ENCODE measurements at regions of chr1 and their contacts with region 1.

Region 1: GRCh38 chr1:31422505-31423319 is 9.7 kb downstream of the SERINC2 start:
- DNase-seq: peak; percentile 70
- ATAC-seq: peak; percentile 53
- H3K4me3 Mint-ChIP-seq: peak overlapping the region; percentile 58
- H3K27ac Mint-ChIP-seq: peak overlapping the region; percentile 73
- H3K4me1 Mint-ChIP-seq: peaks cover 25% of the 10 kb centered on the region
- H3K27me3 Mint-ChIP-seq: no peaks in the 10 kb centered on the region
- CTCF ChIP-seq: peak; percentile 78

Region 2: GRCh38 chr1:31155216-31155841 is 267.4 kb before region 1 on chr1:
- CTCF ChIA-PET with region 1: no interaction called
- POLR2A ChIA-PET with region 1: no interaction called
- intact Hi-C with region 1: loop called (anchors 2 kb)
- DNase-seq: peak; percentile 70
- ATAC-seq: peak; percentile 77
- H3K4me3 Mint-ChIP-seq: peak overlapping the region; percentile 85
- H3K27ac Mint-ChIP-seq: peak overlapping the region; percentile 70
- H3K4me1 Mint-ChIP-seq: peaks cover 11% of the 10 kb centered on the region
- H3K27me3 Mint-ChIP-seq: no peaks in the 10 kb centered on the region
- CTCF ChIP-seq: no peak

Region 3: GRCh38 chr1:31182352-31182751 is 240.4 kb before region 1 on chr1:
- CTCF ChIA-PET with region 1: interaction called, 48 read pairs
- POLR2A ChIA-PET with region 1: no interaction called
- intact Hi-C with region 1: loop called (anchors 1 kb)
- DNase-seq: peak; percentile 55
- ATAC-seq: peak; percentile 68
- H3K4me3 Mint-ChIP-seq: no peak overlapping the region
- H3K27ac Mint-ChIP-seq: no peak overlapping the region
- H3K4me1 Mint-ChIP-seq: peaks cover 5% of the 10 kb centered on the region
- H3K27me3 Mint-ChIP-seq: peaks cover 45% of the 10 kb centered on the region
- CTCF ChIP-seq: no peak

Region 4: DNA sequence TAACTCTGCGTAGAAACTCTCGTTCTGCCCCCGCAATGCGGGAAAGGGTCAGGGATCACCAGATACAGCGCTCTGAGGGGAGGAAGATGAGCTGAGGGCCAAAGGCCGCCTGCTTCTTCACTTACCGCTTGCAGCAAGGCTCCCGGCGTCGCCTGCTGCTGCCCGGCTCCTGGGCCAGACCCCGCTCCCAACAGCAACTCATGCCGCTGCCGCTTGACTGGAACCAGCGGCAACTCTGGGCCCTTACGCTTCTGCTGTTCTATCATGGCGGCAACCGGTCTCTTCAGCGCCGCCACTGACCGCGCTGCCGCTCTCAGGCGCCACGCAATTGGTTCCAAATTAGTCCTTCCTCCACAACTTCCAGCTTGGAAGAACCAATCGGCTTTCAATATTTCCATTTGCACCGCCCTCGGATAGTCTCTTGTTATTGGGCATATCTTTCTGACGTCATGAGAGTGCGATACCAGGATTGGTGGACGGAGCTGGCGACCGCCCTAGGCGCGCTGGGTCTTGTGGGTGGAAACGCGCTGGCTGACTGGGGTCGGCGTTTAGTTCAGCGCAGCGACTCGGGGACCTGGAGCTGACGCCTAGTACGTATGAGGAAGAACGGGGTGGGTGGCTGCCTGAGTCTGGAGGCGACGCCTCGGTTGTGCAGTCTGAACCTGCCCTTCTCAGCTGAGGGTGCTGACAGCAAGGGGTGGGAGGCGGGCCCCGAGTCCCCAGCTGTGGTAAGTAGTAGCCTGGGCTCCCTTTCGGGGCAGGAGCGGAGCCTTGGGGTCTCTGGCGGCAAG is 126.0 kb before region 1 on chr1 and contains the starts of genes SNRNP40 and ZCCHC17:
- CTCF ChIA-PET with region 1: no interaction called
- POLR2A ChIA-PET with region 1: no interaction called
- intact Hi-C with region 1: loop called (anchors 2 kb)
- DNase-seq: peak; percentile 79
- ATAC-seq: peak; percentile 96
- H3K4me3 Mint-ChIP-seq: no peak within 1 kb of the TSS
- H3K27ac Mint-ChIP-seq: no peak within 1 kb of the TSS
- H3K4me1 Mint-ChIP-seq: peaks cover 13% of the 10 kb centered on the region
- H3K27me3 Mint-ChIP-seq: no peaks in the 10 kb centered on the region
- CTCF ChIP-seq: no peak
- total RNA-seq, gene SNRNP40: 83.2 and 85.1 TPM in 2 replicates
- total RNA-seq, gene ZCCHC17: 19.5 and 19.9 TPM in 2 replicates

Region 5: GRCh38 chr1:31394628-31395193 is 28.0 kb before region 1 on chr1:
- CTCF ChIA-PET with region 1: interaction called, 60 read pairs
- POLR2A ChIA-PET with region 1: interaction called, 3 read pairs
- intact Hi-C with region 1: loop called (anchors 1 kb)
- DNase-seq: peak; percentile 72
- ATAC-seq: peak; percentile 98
- H3K4me3 Mint-ChIP-seq: peak overlapping the region; percentile 85
- H3K27ac Mint-ChIP-seq: no peak overlapping the region
- H3K4me1 Mint-ChIP-seq: peaks cover 14% of the 10 kb centered on the region
- H3K27me3 Mint-ChIP-seq: no peaks in the 10 kb centered on the region
- CTCF ChIP-seq: no peak

Region 6: GRCh38 chr1:31548907-31549808 is 126.4 kb after region 1 on chr1:
- CTCF ChIA-PET with region 1: interaction called, 22 read pairs
- POLR2A ChIA-PET with region 1: no interaction called
- intact Hi-C with region 1: loop called (anchors 1 kb)
- DNase-seq: peak; percentile 79
- ATAC-seq: peak; percentile 98
- H3K4me3 Mint-ChIP-seq: peak overlapping the region; percentile 17
- H3K27ac Mint-ChIP-seq: no peak overlapping the region
- H3K4me1 Mint-ChIP-seq: peaks cover 11% of the 10 kb centered on the region
- H3K27me3 Mint-ChIP-seq: peaks cover 6% of the 10 kb centered on the region
- CTCF ChIP-seq: peak; percentile 53